ENCODE measurements at regions of chrX and their contacts with region 1.

Region 1: GRCh38 chrX:68196939-68197791 is 236.1 kb downstream of the OPHN1 start:
- DNase-seq: peak in 5 of 14 experiments; percentile 1 to 41 (median 35)
- ATAC-seq: no peak
- H3K4me3 ChIP-seq: no peak overlapping the region
- H3K4me3 Mint-ChIP-seq: no peak overlapping the region
- H3K27ac ChIP-seq: no peak overlapping the region
- H3K27ac Mint-ChIP-seq: no peak overlapping the region
- H3K4me1 ChIP-seq: no peaks in the 10 kb centered on the region
- H3K4me1 Mint-ChIP-seq: no peaks in the 10 kb centered on the region
- H3K27me3 ChIP-seq: no peaks in the 10 kb centered on the region
- H3K27me3 Mint-ChIP-seq: no peaks in the 10 kb centered on the region
- CTCF ChIP-seq: peak; percentile 37

Region 2: GRCh38 chrX:68462653-68463052 is 265.5 kb after region 1 on chrX:
- CTCF ChIA-PET with region 1: no interaction called
- POLR2A ChIA-PET with region 1: no interaction called
- intact Hi-C with region 1: loop called in 1 of 2 experiments (anchors 10 kb)
- DNase-seq: peak in 4 of 14 experiments; percentile 0 to 40 (median 34)
- ATAC-seq: peak; percentile 32
- H3K4me3 ChIP-seq: no peak overlapping the region
- H3K4me3 Mint-ChIP-seq: no peak overlapping the region
- H3K27ac ChIP-seq: no peak overlapping the region
- H3K27ac Mint-ChIP-seq: no peak overlapping the region
- H3K4me1 ChIP-seq: no peaks in the 10 kb centered on the region
- H3K4me1 Mint-ChIP-seq: no peaks in the 10 kb centered on the region
- H3K27me3 ChIP-seq: no peaks in the 10 kb centered on the region
- H3K27me3 Mint-ChIP-seq: no peaks in the 10 kb centered on the region
- CTCF ChIP-seq: no peak

Measured in CD4-positive, alpha-beta T cell (primary cell).